ENCODE measurements at regions of chr17 and their contacts with region 1.

Region 1: DNA sequence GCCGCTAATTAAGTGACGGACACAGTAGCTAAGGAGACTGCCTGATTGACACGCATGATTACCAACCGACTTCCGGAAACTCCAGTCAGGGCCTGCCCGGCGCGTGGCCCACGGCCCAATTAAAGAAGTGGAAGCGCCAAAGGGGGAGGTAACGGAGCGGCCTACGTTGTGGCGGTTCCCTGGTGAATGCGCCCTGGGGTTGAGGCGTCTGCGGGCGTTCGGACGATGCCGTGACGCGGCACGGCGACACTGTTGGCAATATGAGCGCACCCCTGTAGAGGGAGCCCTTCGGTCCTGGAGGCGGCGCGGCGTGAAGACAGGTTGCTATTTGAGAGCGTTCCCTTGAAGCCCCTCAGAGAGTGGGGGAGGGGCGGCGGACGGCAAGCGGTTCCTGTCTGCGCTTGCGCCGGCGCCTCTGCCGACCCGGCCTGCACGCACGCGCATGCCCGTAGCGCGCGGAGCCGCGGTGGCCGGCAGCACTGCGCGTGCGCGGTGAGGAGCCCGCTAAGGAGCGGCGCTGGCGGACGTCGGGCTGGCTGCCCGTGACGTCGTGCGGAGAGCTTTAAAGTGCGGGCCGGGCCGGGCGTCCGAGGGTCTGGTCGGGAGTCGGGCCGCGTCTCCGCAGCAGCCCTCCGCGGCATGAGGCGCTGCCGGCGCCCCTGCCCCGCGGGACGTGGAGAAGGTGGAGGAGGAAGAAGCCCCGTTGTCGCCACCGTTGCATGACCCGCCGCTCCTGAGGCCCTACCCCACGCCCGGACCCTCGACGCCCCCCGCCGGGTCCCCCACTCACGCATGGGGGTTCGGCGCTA is at the start of gene ALKBH5:
- DNase-seq: peak; percentile 98
- ATAC-seq: peak; percentile 82
- H3K4me3 Mint-ChIP-seq: peak within 1 kb of the TSS; percentile 98
- H3K27ac Mint-ChIP-seq: peak within 1 kb of the TSS; percentile 99
- H3K4me1 Mint-ChIP-seq: peaks cover 47% of the 10 kb centered on the region
- H3K27me3 Mint-ChIP-seq: no peaks in the 10 kb centered on the region
- CTCF ChIP-seq: no peak
- total RNA-seq, gene ALKBH5: 72.8 and 74.6 TPM in 2 replicates

Region 2: DNA sequence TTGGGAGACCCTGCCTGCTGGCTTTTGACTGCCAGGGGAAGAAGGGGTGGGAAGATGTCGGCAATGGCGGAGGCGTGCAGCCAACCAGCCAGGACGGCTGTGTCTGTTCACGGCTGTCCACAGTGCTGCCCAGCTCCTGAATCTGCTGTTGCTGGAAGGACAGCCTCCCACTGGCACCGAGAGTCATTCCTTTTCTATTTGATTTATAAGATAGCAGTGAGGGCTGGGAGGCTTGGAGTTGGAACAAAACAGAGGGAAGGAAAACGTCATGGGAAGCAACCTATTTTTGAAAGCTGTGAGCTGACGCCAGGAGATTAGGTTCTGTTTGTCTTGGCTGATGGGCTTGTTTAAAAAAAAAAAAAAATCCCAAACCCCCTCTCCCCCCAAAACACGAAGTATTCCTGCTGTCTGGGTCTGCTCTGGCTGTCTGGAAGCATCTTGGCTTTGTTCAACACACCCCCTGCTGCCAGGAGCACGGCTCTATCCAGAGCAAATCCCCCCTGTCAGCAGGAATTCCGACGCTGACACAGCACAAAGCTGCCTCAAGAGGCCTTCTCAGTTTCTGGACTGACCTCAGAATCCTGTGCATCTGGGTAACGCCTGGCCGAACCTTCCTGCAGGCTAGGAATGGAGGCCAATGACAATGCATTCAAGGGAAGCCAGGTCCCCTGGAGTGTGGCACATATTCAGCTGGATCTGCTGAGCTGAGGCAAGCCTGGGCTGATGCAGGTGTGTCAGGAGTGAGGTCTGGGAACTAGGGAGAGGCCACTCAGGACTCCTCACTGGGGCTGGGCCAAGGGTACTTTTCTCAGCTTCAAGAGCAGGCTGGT is 305.8 kb before region 1 on chr17:
- CTCF ChIA-PET with region 1: no interaction called
- POLR2A ChIA-PET with region 1: no interaction called
- intact Hi-C with region 1: no loop called
- DNase-seq: no peak
- ATAC-seq: no peak
- H3K4me3 Mint-ChIP-seq: no peak overlapping the region
- H3K27ac Mint-ChIP-seq: no peak overlapping the region
- H3K4me1 Mint-ChIP-seq: no peaks in the 10 kb centered on the region
- H3K27me3 Mint-ChIP-seq: no peaks in the 10 kb centered on the region
- CTCF ChIP-seq: no peak

Region 3: DNA sequence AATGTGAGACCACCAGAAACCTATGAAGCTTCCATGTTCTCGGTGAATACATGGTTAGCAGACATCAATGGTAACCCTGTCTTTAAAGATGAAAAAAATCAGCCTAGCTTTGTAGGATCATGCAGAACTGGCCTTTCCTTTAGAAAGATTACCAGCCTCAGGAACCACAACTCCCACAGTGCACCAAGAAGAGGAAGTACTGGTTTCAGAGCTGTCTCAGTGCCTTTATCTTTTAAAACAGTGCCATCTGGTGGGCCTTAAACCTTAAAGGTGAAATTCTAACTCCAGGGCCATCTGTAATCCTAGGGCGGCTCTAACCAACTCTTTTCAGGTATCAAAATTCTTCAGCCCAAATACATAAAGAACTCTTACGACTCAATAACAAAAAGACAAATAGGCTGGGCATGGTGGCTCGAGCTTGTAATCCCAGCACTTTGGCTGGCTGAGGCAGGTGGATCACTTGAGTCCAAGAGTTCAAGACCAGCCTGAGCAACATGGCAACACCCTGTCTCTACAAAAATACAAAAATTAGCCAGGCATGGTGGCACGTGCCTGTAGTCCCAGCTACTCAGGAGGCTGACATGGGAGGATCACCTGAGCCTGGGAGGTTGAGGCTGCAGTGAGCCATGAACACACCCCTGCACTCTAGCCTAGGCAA is 150.0 kb before region 1 on chr17:
- CTCF ChIA-PET with region 1: no interaction called
- POLR2A ChIA-PET with region 1: interaction called, 3 read pairs
- intact Hi-C with region 1: loop called (anchors 1 kb)
- DNase-seq: no peak
- ATAC-seq: peak; percentile 79
- H3K4me3 Mint-ChIP-seq: no peak overlapping the region
- H3K27ac Mint-ChIP-seq: peak overlapping the region; percentile 61
- H3K4me1 Mint-ChIP-seq: peaks cover 50% of the 10 kb centered on the region
- H3K27me3 Mint-ChIP-seq: no peaks in the 10 kb centered on the region
- CTCF ChIP-seq: peak; percentile 54

Region 4: DNA sequence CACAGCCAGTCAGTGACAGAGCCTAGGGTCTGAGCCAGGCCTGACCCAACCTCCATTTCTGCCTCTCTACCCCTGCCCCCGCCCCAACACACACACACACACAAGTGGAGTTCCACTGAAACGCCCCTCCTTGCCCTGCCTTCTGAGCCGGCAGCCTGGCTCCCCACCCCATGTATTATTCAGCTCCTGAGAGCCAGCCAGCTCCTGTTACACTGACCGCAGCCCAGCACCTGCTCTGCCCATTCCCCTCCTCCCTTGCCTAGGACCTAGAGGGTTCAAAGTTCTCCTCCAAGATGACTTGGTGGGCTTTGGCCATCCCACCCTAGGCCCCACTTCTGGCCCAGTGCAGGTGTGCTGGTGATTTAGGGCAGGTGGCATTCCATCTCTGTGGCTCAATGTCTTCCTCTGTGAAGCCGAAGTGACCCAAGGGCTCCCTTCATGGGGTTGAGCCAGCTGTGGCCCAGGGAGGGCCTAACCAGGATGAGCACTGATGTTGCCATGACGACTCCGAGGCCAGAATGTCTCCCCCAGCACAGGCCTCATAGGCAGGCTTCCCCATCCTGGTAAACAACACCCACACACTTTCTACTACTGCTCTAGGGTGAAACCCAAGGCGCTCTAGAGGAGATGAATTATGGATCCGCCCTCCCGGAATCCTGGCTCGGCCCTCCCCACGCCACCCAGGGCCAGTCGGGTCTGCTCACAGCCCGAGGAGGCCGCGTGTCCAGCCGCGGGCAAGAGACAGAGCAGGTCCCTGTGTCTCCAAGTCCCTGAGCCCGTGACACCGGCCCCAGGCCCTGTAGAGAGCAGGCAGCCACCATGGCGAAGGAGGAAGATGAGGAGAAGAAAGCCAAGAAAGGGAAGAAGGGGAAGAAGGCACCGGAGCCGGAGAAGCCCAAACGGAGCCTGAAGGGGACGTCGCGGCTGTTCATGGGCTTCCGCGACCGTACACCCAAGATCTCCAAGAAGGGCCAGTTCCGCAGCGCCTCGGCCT is 65.3 kb before region 1 on chr17:
- CTCF ChIA-PET with region 1: no interaction called
- POLR2A ChIA-PET with region 1: no interaction called
- intact Hi-C with region 1: no loop called
- DNase-seq: no peak
- ATAC-seq: no peak
- H3K4me3 Mint-ChIP-seq: no peak overlapping the region
- H3K27ac Mint-ChIP-seq: no peak overlapping the region
- H3K4me1 Mint-ChIP-seq: no peaks in the 10 kb centered on the region
- H3K27me3 Mint-ChIP-seq: no peaks in the 10 kb centered on the region
- CTCF ChIP-seq: no peak

Region 5: GRCh38 chr17:18141210-18141803 is 42.2 kb before region 1 on chr17:
- CTCF ChIA-PET with region 1: interaction called, 12 read pairs
- POLR2A ChIA-PET with region 1: interaction called, 3 read pairs
- intact Hi-C with region 1: loop called (anchors 1 kb)
- DNase-seq: no peak
- ATAC-seq: peak; percentile 69
- H3K4me3 Mint-ChIP-seq: no peak overlapping the region
- H3K27ac Mint-ChIP-seq: no peak overlapping the region
- H3K4me1 Mint-ChIP-seq: peaks cover 4% of the 10 kb centered on the region
- H3K27me3 Mint-ChIP-seq: peaks cover 6% of the 10 kb centered on the region
- CTCF ChIP-seq: peak; percentile 31

Region 6: DNA sequence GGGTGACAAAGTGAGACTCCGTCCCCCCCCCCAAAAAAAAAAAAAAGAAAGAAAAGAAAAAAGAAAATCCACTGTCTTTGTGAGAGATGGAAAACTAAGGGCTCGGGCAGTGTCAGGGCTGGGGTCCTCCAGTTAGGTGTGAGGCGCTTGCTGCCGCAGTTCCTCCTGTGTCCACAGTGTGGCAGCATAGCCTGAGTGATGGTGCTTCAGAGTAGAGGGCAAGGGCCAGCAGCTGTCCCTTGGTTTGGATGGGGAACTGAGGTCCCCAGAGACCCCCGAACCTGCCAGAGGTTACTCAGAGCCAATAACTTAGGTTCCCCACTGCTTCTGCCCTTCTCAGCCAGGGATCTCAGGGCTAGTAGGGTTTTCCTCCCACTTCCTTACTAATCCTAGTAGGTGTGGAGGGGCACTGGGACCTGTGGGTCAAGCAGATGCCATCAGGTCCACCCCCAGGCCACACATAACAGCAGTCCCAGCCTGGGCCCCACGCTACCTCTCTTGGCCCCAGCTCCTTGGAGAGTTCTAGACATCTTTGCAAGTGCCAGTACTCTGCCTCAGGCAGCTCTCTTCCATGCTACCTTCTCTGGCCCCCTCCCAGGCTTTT is 34.0 kb after region 1 on chr17:
- CTCF ChIA-PET with region 1: no interaction called
- POLR2A ChIA-PET with region 1: interaction called, 4 read pairs
- intact Hi-C with region 1: loop called (anchors 2 kb)
- DNase-seq: peak; percentile 64
- ATAC-seq: peak; percentile 98
- H3K4me3 Mint-ChIP-seq: no peak overlapping the region
- H3K27ac Mint-ChIP-seq: no peak overlapping the region
- H3K4me1 Mint-ChIP-seq: peaks cover 5% of the 10 kb centered on the region
- H3K27me3 Mint-ChIP-seq: no peaks in the 10 kb centered on the region
- CTCF ChIP-seq: no peak

Region 7: DNA sequence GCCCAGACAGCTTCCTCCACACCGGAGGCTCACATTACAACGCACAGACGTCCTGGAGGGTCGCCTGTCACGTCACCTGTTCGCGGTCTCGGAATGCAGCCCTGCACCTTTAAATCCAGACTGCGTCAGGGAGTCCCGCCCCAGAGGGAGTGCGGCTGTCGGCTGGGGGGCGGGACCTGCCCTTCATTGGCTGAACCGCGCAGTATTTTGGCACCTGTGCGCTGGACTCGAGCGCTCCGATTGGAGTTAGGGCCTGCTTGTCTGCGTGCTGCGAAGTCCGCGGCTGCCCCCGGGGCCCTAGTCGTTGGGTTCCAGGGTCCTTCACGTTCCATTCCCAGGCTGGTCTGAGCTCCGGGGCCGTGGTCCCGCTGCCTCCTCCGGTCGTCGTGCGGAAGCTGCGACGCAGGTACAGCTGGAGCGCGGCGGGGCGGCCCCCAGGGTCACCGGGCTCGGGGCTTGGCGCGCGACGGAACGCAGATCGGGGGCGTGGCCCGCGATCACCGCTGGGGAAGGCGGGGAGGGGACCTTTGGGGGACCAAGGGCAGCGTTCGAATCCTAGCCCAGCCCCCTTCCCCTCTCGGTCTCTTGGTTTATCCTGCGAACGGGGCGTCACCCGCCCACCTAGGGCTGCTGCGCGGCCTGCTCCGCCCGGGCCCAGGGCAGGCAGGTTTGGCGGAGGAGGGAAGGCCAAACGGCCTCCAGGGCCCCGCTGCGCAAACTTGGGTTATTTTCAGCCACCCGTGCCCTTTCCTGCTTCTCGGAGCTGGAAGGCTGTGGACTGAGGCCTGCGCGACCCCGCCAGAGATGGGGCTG is 77.0 kb after region 1 on chr17 and contains the start of gene MIEF2:
- CTCF ChIA-PET with region 1: no interaction called
- POLR2A ChIA-PET with region 1: interaction called, 3 read pairs
- intact Hi-C with region 1: loop called (anchors 1 kb)
- DNase-seq: peak; percentile 84
- ATAC-seq: peak; percentile 89
- H3K4me3 Mint-ChIP-seq: peak within 1 kb of the TSS; percentile 79
- H3K27ac Mint-ChIP-seq: peak within 1 kb of the TSS; percentile 77
- H3K4me1 Mint-ChIP-seq: peaks cover 38% of the 10 kb centered on the region
- H3K27me3 Mint-ChIP-seq: no peaks in the 10 kb centered on the region
- CTCF ChIP-seq: no peak
- total RNA-seq, gene MIEF2: 5.6 and 8.8 TPM in 2 replicates

Measured in activated B cell treated with CpG ODN at 0.5 μM for 24 hours (primary cell).